ENCODE measurements at regions of chr5 and their contacts with region 1.

Region 1: DNA sequence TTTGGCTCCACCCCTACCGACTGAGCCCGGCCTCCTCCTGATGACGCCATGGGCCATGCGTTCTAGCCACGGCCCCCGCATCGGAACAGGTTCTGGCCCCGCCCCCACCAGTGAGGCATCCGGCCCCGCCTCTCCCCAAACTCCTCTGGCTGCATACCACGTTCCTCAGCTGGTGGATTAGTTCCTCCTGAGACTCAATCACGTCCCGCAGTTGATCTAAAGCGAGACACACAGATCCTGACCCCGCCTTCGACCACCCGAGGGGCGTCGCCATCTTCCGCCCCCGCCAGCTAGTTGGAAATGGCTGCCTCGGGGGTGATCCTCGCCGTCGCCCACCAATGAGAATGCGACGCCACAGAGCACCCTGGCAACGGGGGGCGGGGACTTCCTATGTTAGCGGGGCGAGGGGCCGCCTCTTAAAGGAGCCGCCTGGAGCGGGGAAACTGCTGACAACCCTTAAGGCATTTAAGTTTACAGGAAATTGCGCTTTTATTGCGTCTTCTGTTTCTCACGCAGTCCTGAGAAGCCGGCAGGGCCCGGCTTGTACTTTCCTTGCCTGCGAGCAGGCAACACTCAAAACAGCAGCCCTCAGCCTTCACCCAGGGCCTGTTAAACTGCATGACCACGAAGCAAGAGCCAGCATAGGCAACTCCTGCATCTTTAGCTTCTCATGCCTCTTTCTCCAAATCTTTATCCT is at the start of gene SPATA24:
- DNase-seq: peak; percentile 97
- CTCF ChIP-seq: no peak

Region 2: DNA sequence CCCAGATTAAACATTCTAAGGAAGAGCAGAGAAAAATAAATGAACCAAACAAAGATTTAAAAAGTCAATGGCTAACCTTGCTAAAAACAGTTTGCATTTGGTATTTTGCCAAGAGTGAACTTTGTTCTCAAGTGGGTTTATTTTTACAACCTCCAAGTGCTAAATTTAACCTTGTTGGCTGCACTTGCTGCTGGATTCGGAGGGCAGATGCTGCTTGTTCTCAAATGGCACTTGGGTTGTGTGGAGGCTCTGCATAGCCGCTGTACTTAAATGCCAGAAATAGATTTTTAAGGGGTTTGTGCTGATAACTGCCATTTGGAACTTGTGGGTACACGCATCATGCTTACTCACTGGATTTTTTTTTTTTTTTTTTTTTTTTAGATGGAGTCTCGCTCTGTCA is 13.3 kb after region 1 on chr5:
- CTCF ChIA-PET with region 1: interaction called, 34 read pairs
- POLR2A ChIA-PET with region 1: no interaction called
- DNase-seq: no peak
- CTCF ChIP-seq: no peak

Measured in GM10248 (cell line).